Activated CD8-positive, alpha-beta T cell treated with anti-CD3 and anti-CD28 coated beads, Interleukin-2, amount 10 ng/mL, durations not matched to agents 7 days and 5 days (primary cell): ENCODE measurements at regions of chr15 and their contacts with region 1.

Region 1: DNA sequence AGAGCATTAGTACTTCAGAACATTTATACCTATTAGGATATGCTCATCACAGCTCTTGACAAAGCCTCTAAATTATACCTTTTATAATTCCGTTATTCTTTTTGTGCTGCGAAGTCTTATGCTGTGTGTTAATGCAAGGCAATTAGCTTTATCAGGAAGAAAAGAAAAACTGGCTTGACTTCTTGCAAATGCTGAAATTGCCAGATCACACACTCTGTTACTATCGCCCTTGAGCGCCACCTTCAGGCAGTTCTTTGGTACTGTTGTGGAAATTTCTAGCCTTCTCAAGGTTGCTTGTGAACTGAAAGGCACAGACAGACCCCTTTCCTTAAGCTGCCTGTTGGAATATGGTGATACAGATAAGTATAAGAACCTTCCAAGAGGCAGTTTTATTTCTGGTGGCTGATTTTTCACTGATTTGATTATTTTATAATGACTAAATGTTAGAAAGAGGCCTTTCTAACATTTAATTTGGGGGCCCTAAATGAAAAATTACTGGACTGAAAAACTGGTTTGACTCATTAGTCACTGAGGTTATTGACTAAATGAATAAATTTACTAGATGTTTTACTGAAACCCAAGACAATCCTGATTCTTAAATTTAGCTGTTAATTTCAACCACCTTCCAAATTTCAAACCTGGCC is 126.2 kb upstream of the RASGRP1 start:
- DNase-seq: peak; percentile 91
- ATAC-seq: peak; percentile 28
- H3K4me3 Mint-ChIP-seq: no peak overlapping the region
- H3K27ac Mint-ChIP-seq: no peak overlapping the region
- H3K4me1 Mint-ChIP-seq: peaks cover 82% of the 10 kb centered on the region
- H3K27me3 Mint-ChIP-seq: no peaks in the 10 kb centered on the region

Region 2: DNA sequence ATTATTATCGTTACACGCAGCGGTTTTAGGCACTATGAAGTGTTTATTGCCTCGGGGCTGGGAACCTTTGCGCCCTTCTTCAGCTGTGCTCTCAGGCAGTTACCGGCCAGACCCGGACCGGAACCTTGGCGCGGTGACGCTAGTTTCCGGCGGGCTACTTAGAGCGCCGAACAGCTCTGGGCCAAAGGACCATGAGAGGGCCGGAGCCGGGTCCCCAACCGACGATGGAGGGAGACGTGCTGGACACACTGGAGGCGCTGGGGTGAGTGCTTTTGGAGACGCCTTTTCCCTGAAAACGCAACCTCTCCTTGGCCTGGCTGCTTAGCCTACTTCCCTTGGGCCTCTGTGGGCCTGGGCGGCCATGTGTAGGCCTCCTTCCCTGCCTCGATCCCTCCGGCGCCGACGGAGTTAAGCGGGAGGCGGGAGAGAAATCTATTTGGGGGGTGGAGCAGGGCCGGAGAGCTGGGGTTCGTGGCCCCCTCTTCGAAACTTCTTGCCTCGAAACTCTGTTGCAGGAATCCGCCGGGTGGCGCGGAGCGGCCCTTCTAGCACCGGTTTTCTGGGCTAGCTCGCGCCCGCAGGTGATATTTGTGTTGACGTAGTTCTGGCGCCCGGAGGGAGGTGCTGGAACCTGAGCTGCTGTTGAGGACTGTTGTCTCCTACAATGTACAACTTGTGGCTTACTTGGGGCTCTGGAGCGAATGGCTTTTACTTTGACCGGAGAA is 236.7 kb before region 1 on chr15 and contains the start of gene FAM98B:
- CTCF ChIA-PET with region 1: interaction called, 84 read pairs
- POLR2A ChIA-PET with region 1: interaction called, 10 read pairs
- DNase-seq: peak; percentile 89
- ATAC-seq: peak; percentile 92
- H3K4me3 Mint-ChIP-seq: peak within 1 kb of the TSS; percentile 96
- H3K27ac Mint-ChIP-seq: peak within 1 kb of the TSS; percentile 92
- H3K4me1 Mint-ChIP-seq: peaks cover 29% of the 10 kb centered on the region
- H3K27me3 Mint-ChIP-seq: peaks cover 9% of the 10 kb centered on the region
- total RNA-seq, gene FAM98B: 42.8 to 43.9 TPM

Region 3: GRCh38 chr15:38479266-38479665 is 211.5 kb before region 1 on chr15:
- CTCF ChIA-PET with region 1: interaction called, 130 read pairs
- POLR2A ChIA-PET with region 1: interaction called, 5 read pairs
- DNase-seq: no peak
- ATAC-seq: no peak
- H3K4me3 Mint-ChIP-seq: no peak overlapping the region
- H3K27ac Mint-ChIP-seq: no peak overlapping the region
- H3K4me1 Mint-ChIP-seq: peaks cover 18% of the 10 kb centered on the region
- H3K27me3 Mint-ChIP-seq: no peaks in the 10 kb centered on the region

Region 4: GRCh38 chr15:38508647-38509046 is 182.2 kb before region 1 on chr15:
- CTCF ChIA-PET with region 1: interaction called, 56 read pairs
- POLR2A ChIA-PET with region 1: interaction called, 4 read pairs
- DNase-seq: no peak
- ATAC-seq: no peak
- H3K4me3 Mint-ChIP-seq: no peak overlapping the region
- H3K27ac Mint-ChIP-seq: peak overlapping the region; percentile 60
- H3K4me1 Mint-ChIP-seq: peaks cover 13% of the 10 kb centered on the region
- H3K27me3 Mint-ChIP-seq: no peaks in the 10 kb centered on the region

Region 5: DNA sequence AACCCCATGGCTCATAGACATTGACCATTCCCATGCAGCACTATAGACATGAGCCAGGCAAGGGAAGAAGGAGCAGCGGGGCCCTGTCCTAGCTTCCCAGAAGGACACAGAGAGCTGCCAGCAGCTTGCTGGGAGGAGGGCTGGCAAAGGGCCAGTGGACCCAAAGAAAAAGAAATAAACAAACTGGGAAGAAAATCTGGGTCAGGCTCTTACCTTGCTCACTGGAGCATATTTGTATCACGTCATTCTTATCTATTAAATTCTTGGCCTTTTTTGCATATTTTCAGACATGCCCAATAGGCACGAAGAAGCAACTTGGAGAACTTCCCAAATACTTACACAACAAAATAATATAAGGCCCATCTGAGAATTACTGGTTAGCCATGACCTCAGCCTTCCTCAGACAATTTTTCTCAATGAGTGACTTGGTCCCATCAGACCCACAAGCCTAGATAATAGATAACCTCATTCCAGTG is 154.6 kb before region 1 on chr15:
- CTCF ChIA-PET with region 1: interaction called, 21 read pairs
- POLR2A ChIA-PET with region 1: no interaction called
- DNase-seq: peak; percentile 2
- ATAC-seq: no peak
- H3K4me3 Mint-ChIP-seq: no peak overlapping the region
- H3K27ac Mint-ChIP-seq: peak overlapping the region; percentile 73
- H3K4me1 Mint-ChIP-seq: peaks cover 97% of the 10 kb centered on the region
- H3K27me3 Mint-ChIP-seq: no peaks in the 10 kb centered on the region

Region 6: GRCh38 chr15:38624244-38625205 is 66.3 kb before region 1 on chr15:
- CTCF ChIA-PET with region 1: interaction called, 13 read pairs
- POLR2A ChIA-PET with region 1: no interaction called
- DNase-seq: no peak
- ATAC-seq: no peak
- H3K4me3 Mint-ChIP-seq: no peak overlapping the region
- H3K27ac Mint-ChIP-seq: no peak overlapping the region
- H3K4me1 Mint-ChIP-seq: peaks cover 32% of the 10 kb centered on the region
- H3K27me3 Mint-ChIP-seq: no peaks in the 10 kb centered on the region

Region 7: DNA sequence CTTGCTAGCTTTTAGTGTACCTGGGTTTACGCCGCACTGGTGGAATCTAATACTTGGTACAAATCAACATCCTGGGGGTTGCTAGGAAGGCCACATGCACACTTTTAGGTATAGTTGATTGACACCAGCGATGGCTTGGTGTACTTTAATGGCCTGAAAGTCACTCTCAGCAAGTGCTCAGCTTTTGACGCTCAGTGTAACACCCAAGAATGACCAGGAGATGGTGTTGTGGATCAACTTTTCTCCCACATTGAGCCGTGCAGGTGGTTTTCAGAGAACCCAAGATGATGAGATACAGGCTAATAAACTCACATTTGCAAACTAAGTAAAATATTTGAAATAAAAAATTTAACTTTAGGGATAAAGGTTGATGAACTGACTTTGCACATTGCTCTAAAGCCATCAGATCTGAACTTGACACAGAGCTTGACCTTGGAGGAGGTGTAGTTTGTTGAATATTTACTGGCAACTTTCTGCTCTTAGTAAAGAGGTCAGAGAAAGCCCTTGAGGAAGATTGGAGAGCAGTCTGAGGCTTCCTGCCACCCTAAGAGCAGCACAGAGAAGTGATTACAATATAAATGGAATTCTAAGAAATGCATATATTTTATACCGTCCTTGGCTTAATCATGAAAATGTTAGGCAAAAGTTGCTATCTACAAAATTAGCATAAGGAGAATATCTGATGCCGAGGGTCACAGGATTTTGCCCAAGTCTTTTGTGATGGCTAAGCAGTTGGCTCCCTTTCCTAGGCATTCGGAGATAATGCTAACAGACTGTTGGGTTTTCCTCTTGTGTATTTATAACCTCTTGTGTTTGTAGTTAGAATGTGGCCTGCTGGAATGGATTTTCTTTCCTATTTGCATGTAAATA is 17.2 kb after region 1 on chr15:
- CTCF ChIA-PET with region 1: interaction called, 357 read pairs
- POLR2A ChIA-PET with region 1: no interaction called
- DNase-seq: peak; percentile 60
- ATAC-seq: peak; percentile 77
- H3K4me3 Mint-ChIP-seq: no peak overlapping the region
- H3K27ac Mint-ChIP-seq: no peak overlapping the region
- H3K4me1 Mint-ChIP-seq: peaks cover 7% of the 10 kb centered on the region
- H3K27me3 Mint-ChIP-seq: peaks cover 15% of the 10 kb centered on the region

Region 8: GRCh38 chr15:38930851-38931537 is 240.2 kb after region 1 on chr15:
- CTCF ChIA-PET with region 1: no interaction called
- POLR2A ChIA-PET with region 1: no interaction called
- DNase-seq: no peak
- ATAC-seq: no peak
- H3K4me3 Mint-ChIP-seq: no peak overlapping the region
- H3K27ac Mint-ChIP-seq: no peak overlapping the region
- H3K4me1 Mint-ChIP-seq: no peaks in the 10 kb centered on the region
- H3K27me3 Mint-ChIP-seq: peaks cover 5% of the 10 kb centered on the region